ENCODE measurements at regions of chr5 and their contacts with region 1.

Region 1: GRCh38 chr5:72847989-72848473 is 31.6 kb downstream of the TNPO1 start:
- DNase-seq: peak; percentile 88 to 90
- ATAC-seq: peak; percentile 79 to 91 (median 84)
- H3K4me3 ChIP-seq: peak overlapping the region; percentile 81
- H3K4me3 Mint-ChIP-seq: peak overlapping the region; percentile 95
- H3K27ac ChIP-seq: peak overlapping the region; percentile 77
- H3K27ac Mint-ChIP-seq: peak overlapping the region; percentile 93 to 97
- H3K4me1 ChIP-seq: peaks cover 6% of the 10 kb centered on the region
- H3K4me1 Mint-ChIP-seq: peaks cover 46% of the 10 kb centered on the region in 2 donors
- H3K27me3 ChIP-seq: no peaks in the 10 kb centered on the region
- H3K27me3 Mint-ChIP-seq: no peaks in the 10 kb centered on the region
- CTCF ChIP-seq: no peak

Region 2: GRCh38 chr5:72955768-72956323 is 107.8 kb after region 1 on chr5 and contains the start of gene FCHO2:
- intact Hi-C with region 1: loop called (anchors 5 kb)
- DNase-seq: peak; percentile 98
- ATAC-seq: peak; percentile 96 to 99 (median 97)
- H3K4me3 ChIP-seq: peak within 1 kb of the TSS; percentile 51
- H3K4me3 Mint-ChIP-seq: peak within 1 kb of the TSS; percentile 95
- H3K27ac ChIP-seq: peak within 1 kb of the TSS; percentile 23
- H3K27ac Mint-ChIP-seq: peak within 1 kb of the TSS; percentile 82 to 98
- H3K4me1 ChIP-seq: peaks cover 10% of the 10 kb centered on the region
- H3K4me1 Mint-ChIP-seq: peaks cover 27 to 33% of the 10 kb centered on the region in 2 donors
- H3K27me3 ChIP-seq: peaks cover 11% of the 10 kb centered on the region
- H3K27me3 Mint-ChIP-seq: peaks cover 0 to 6% of the 10 kb centered on the region in 2 donors
- CTCF ChIP-seq: peak; percentile 70
- total RNA-seq, gene FCHO2: 18.5 to 23.4 (median 22.7) TPM